ENCODE measurements at regions of chr1 and their contacts with region 1.

Region 1: DNA sequence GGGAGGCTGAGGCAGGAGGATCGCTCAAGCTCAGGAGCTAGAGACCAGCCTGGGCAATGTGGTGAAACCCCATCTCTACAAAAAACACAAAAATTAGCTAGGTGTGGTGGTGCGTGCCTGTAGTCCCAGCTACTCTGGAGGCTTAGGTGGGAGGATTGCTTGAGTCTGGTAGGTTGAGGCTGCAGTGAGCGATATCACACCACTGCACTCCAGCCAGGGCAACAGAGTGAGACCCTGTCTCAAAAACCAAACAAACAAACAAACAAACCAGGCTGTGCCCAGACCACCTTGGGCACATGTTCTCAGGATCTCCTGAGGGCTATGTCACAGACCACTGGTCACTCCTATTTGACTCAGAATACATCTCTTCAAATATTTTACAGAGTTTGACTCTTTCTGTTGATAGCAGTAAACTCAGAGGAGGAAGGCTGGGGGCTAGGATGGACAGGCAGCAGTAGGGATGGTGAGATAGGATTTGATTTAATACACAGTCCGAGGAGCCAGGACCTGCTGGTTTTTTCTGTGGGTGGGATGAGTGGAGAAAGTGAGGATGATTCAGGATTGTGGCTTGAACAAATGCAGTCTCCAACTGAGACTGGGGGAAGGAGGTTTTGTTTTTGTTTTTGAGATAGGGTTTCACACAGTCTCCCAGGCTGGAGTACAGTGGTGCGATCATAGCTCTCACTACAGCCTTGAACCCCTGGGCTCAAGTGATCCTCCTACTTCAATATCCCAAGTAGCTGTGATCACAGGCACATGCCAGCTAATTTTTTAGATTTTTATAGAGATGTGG is 46.5 kb downstream of the OLFML3 start:
- DNase-seq: no peak
- H3K4me3 ChIP-seq: no peak overlapping the region
- H3K27ac ChIP-seq: no peak overlapping the region
- H3K4me1 ChIP-seq: no peaks in the 10 kb centered on the region
- H3K27me3 ChIP-seq: peaks cover 11% of the 10 kb centered on the region
- CTCF ChIP-seq: no peak

Region 2: GRCh38 chr1:114081437-114082303 is 55.9 kb after region 1 on chr1:
- intact Hi-C with region 1: loop called (anchors 2 kb)
- DNase-seq: no peak
- H3K4me3 ChIP-seq: peak overlapping the region; percentile 1
- H3K27ac ChIP-seq: peak overlapping the region; percentile 42
- H3K4me1 ChIP-seq: peaks cover 20% of the 10 kb centered on the region
- H3K27me3 ChIP-seq: peaks cover 13% of the 10 kb centered on the region
- CTCF ChIP-seq: no peak

Region 3: DNA sequence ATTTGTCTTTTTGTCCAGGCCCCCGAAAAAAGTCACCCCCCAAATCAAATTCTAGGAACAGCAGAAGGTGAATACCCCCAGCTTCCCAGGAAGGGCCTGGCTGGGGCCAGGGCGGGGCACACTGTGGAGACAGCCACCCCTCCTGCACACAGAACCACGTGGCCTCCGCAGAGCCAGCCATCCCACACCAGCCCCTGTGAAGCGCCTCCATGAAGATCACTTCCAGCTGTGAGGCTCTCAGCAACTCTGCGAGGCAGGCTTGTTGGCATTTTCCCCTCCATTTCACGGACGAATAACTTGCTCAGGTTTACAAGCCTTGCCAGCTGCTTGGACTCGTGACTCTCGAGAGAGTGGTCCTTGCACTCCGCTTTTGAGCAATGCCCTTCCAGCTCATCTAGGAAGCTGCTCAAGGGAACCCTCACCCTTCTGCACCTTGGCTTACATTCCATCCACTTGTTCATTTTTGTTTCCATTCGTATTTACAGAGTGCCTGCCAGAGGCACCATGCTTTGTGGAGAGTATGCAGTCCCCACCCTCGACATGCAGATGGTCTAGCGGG is 79.7 kb after region 1 on chr1:
- intact Hi-C with region 1: no loop called
- DNase-seq: no peak
- H3K4me3 ChIP-seq: no peak overlapping the region
- H3K27ac ChIP-seq: no peak overlapping the region
- H3K4me1 ChIP-seq: no peaks in the 10 kb centered on the region
- H3K27me3 ChIP-seq: peaks cover 33% of the 10 kb centered on the region
- CTCF ChIP-seq: no peak